ENCODE measurements at regions of chr1 and their contacts with region 1.

Region 1: GRCh38 chr1:9494929-9495758 is 44.1 kb upstream of the SLC25A33 start:
- DNase-seq: peak; percentile 57 to 65 (median 63)
- ATAC-seq: peak; percentile 47 to 68 (median 66)
- H3K4me3 ChIP-seq: peak overlapping the region in 1 of 3 donors; percentile 40
- H3K27ac ChIP-seq: no peak overlapping the region
- H3K4me1 ChIP-seq: peaks cover 0 to 18% (median 8%) of the 10 kb centered on the region in 4 donors
- H3K27me3 ChIP-seq: no peaks in the 10 kb centered on the region
- CTCF ChIP-seq: peak; percentile 93 to 100 (median 98)
- POLR2A ChIP-seq: no peak

Region 2: DNA sequence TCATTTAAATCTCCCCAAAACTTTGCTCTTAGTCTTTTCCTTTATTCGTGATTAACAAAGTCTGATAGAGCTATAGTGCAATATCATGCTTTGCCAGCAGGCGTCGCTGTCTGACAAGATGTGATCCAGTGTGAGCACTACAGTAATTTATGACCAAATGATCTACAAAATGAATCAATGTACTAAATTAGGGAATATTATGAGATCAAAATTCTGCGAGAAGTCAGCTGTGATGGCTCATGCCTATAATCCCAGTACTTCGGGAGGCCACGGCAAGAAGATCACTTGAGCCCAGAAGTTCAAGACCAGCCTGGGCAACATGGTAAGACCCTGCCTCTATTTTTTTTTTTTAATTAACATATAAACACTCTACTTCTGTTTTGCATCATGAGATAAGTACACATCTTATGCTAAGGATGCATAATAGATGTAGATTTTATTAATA is 206.0 kb before region 1 on chr1:
- intact Hi-C with region 1: loop called in 1 of 2 experiments (anchors 5 kb)
- DNase-seq: peak in 2 of 3 donors; percentile 69 to 73
- ATAC-seq: peak in 2 of 4 donors; percentile 5 to 24
- H3K4me3 ChIP-seq: no peak overlapping the region
- H3K27ac ChIP-seq: peak overlapping the region in 1 of 3 donors; percentile 21
- H3K4me1 ChIP-seq: peaks cover 0 to 31% (median 6%) of the 10 kb centered on the region in 4 donors
- H3K27me3 ChIP-seq: no peaks in the 10 kb centered on the region
- CTCF ChIP-seq: peak; percentile 82 to 98 (median 92)
- POLR2A ChIP-seq: no peak

Region 3: DNA sequence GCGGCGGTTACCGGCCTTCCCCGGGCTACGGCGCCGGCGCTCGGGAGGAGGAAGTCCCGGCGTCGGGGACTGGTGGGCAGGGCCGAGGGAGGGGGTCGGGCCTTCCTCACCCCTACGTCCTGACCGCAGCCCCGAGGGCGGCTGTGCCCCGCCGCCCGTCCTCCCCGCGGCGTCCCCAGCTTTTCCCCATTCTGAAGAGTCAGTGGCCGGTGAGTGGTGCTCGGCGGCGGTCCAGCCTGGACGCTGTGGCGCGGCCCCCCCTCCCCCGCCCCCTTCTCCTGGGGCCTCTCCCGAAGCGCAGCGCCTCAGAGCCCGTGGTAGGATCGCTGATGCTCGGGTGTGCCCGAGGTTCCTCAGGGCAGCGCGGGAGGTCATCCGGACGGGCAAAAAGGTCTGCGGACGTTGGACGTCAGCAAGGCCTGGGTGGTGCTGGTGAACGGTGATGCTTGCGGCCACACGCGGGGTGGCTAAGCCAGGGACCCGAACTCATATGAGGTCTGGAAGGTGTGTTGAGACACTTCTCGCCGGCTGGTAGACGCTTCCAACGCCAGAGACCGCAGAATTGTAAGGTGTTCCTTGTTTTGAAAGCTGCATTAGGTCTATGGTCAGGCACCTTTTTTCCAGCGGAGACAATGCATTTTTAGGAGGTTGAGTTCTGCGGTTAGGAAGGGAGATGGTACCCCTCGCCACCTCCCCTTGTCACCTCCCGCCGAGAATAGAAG is 44.8 kb after region 1 on chr1:
- intact Hi-C with region 1: loop called in 1 of 2 experiments (anchors 10 kb)
- DNase-seq: peak; percentile 58 to 78 (median 62)
- ATAC-seq: peak; percentile 28 to 35 (median 32)
- H3K4me3 ChIP-seq: peak overlapping the region; percentile 84 to 91 (median 86)
- H3K27ac ChIP-seq: peak overlapping the region; percentile 80 to 90 (median 89)
- H3K4me1 ChIP-seq: peaks cover 0 to 48% (median 17%) of the 10 kb centered on the region in 4 donors
- H3K27me3 ChIP-seq: no peaks in the 10 kb centered on the region
- CTCF ChIP-seq: no peak
- POLR2A ChIP-seq: no peak

Region 4: DNA sequence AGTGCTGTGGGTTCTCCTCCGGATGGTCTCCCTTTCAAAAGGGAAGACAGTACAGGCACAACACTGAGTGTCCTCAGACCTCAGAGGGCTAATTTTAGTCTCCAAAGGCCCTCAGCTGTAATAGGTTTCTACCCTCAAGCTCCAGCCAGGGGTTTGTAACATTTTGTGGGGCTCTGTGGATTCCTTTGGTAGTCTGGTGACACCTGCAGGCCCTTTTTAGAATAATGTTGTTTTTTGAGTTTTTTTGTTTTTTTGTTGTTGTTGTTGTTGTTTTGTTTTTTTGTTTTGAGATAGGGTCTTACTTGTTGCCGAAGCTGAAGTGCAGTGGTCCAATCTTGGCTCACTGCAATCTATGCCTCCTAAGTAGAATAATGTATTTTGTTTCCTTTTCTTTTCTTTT is 78.6 kb after region 1 on chr1:
- intact Hi-C with region 1: loop called (anchors 5 to 10 kb)
- DNase-seq: no peak
- ATAC-seq: peak in 3 of 4 donors; percentile 13 to 24 (median 24)
- H3K4me3 ChIP-seq: no peak overlapping the region
- H3K27ac ChIP-seq: no peak overlapping the region
- H3K4me1 ChIP-seq: peaks cover 0 to 5% (median 0%) of the 10 kb centered on the region in 4 donors
- H3K27me3 ChIP-seq: no peaks in the 10 kb centered on the region
- CTCF ChIP-seq: peak; percentile 28 to 38 (median 34)
- POLR2A ChIP-seq: no peak

Region 5: DNA sequence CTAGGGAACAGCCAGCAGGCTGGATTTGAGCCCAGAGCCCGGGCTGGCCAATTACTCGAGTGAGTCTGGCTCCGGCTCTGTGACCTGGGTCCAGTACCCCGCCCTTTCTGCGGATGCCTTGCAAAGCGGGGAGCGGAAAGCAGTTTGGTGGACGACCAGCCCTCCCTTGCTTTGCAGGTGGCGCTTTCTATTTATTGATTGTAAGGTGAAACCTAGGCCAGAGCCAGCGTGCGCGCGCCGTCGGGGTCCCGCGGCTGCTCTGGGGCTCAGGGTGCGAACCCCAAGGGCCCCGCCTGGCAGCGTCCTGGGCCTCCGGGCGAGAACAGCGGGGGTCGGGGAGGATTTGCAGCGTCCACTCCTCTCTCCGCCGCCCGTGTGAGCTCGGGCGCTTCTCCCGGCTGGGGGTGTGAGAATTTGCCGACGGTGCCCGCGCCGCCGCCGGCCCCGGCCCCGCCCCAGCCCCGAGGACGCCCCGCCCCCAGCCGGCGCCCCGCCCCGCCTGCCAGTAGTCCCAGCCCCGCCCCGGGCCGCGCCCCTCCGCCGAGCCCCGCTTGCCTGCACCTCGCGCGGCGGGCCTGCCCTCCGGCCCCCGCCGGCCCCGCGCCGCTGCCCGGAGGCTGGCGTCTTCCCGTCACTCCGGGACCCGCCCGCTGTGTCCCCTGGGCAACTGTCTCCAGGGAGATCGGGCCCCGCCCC is 194.0 kb after region 1 on chr1:
- intact Hi-C with region 1: no loop called
- DNase-seq: peak; percentile 87 to 89 (median 87)
- ATAC-seq: peak; percentile 88 to 94 (median 90)
- H3K4me3 ChIP-seq: peak overlapping the region; percentile 45 to 64 (median 54)
- H3K27ac ChIP-seq: no peak overlapping the region
- H3K4me1 ChIP-seq: peaks cover 0 to 26% (median 5%) of the 10 kb centered on the region in 4 donors
- H3K27me3 ChIP-seq: no peaks in the 10 kb centered on the region
- CTCF ChIP-seq: no peak
- POLR2A ChIP-seq: no peak